Activated CD4-positive, alpha-beta T cell treated with anti-CD3 and anti-CD28 coated beads for 36 hours (primary cell): ENCODE measurements at regions of chrX and their contacts with region 1.

Region 1: DNA sequence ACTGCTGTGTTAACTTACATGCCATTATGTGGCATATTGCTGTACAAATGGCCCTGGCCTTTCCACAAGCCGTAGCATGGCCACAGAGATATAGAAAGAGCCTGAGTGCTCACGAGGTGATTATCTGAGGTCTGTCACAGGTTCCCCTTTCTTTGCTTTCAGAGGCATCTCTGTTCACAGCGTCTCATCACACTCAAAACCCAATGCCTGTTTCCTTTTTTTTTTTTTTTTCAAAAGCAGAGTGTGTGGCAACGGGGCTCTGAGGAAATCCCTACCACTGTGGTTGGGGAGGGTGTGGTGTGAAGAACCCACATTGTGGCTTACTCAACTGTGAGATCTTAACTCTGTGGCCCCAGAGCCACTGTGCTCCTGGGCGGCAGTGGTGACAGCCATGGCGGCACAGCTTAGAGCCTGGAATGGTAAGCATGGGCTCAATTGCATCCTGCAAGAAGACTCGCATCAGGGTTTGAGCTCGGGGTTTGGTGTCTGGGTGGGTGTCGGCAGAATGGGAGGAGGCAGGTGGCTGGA is 30.8 kb downstream of the RTL5 start:
- DNase-seq: peak; percentile 81
- ATAC-seq: peak; percentile 77
- H3K4me3 Mint-ChIP-seq: peak overlapping the region; percentile 45
- H3K27ac Mint-ChIP-seq: no peak overlapping the region
- H3K4me1 Mint-ChIP-seq: peaks cover 28% of the 10 kb centered on the region
- H3K27me3 Mint-ChIP-seq: peaks cover 18% of the 10 kb centered on the region

Region 2: DNA sequence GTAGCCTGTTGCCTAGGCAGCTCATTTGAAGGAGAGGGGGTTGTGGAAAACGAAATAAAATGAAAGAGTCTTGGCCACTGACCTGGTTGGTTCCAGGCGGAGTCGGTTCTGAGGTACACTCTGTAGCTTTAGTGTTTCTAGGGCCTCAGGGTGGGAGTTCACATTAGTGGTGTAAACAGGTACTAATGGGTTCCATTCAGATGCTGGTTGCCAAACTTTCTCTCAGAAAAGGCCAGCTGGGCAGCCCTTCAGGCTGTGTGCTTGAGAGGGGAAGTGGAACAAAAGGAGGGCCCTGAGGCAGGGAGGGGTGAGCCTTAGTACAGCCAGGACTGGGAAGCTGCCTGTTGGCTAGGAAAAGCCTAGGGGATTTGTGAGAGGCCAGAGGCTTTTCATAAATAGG is 165.4 kb before region 1 on chrX:
- CTCF ChIA-PET with region 1: no interaction called
- POLR2A ChIA-PET with region 1: no interaction called
- intact Hi-C with region 1: no loop called
- DNase-seq: no peak
- ATAC-seq: no peak
- H3K4me3 Mint-ChIP-seq: no peak overlapping the region
- H3K27ac Mint-ChIP-seq: no peak overlapping the region
- H3K4me1 Mint-ChIP-seq: no peaks in the 10 kb centered on the region
- H3K27me3 Mint-ChIP-seq: peaks cover 7% of the 10 kb centered on the region

Region 3: GRCh38 chrX:72121383-72121782 is 20.5 kb after region 1 on chrX:
- CTCF ChIA-PET with region 1: interaction called, 3 read pairs
- POLR2A ChIA-PET with region 1: no interaction called
- intact Hi-C with region 1: loop called in 1 of 2 experiments (anchors 2 kb)
- DNase-seq: peak; percentile 58
- ATAC-seq: peak; percentile 86
- H3K4me3 Mint-ChIP-seq: no peak overlapping the region
- H3K27ac Mint-ChIP-seq: no peak overlapping the region
- H3K4me1 Mint-ChIP-seq: peaks cover 19% of the 10 kb centered on the region
- H3K27me3 Mint-ChIP-seq: peaks cover 3% of the 10 kb centered on the region

Region 4: GRCh38 chrX:72142094-72142793 is 41.4 kb after region 1 on chrX:
- CTCF ChIA-PET with region 1: no interaction called
- POLR2A ChIA-PET with region 1: no interaction called
- intact Hi-C with region 1: loop called in 1 of 2 experiments (anchors 5 kb)
- DNase-seq: no peak
- ATAC-seq: no peak
- H3K4me3 Mint-ChIP-seq: no peak overlapping the region
- H3K27ac Mint-ChIP-seq: no peak overlapping the region
- H3K4me1 Mint-ChIP-seq: peaks cover 26% of the 10 kb centered on the region
- H3K27me3 Mint-ChIP-seq: peaks cover 6% of the 10 kb centered on the region